Heart left ventricle (tissue), 16 donors: ENCODE measurements at regions of chr20 and their contacts with region 1.

Region 1: GRCh38 chr20:36847009-36847709 is 28.8 kb upstream of the TLDC2 start:
- DNase-seq: peak in 4 of 5 donors; percentile 76 to 92 (median 83)
- ATAC-seq: peak; percentile 82 to 90 (median 89)
- H3K4me3 ChIP-seq: no peak overlapping the region
- H3K27ac ChIP-seq: peak overlapping the region; percentile 64 to 95 (median 85)
- H3K4me1 ChIP-seq: peaks cover 0 to 89% (median 70%) of the 10 kb centered on the region in 12 donors
- H3K27me3 ChIP-seq: no peaks in the 10 kb centered on the region
- CTCF ChIP-seq: no peak
- POLR2A ChIP-seq: no peak

Region 2: GRCh38 chr20:36835453-36836198 is 11.5 kb before region 1 on chr20:
- intact Hi-C with region 1: loop called in 1 of 10 experiments (anchors 1 kb)
- DNase-seq: peak; percentile 95 to 96 (median 96)
- ATAC-seq: peak; percentile 83 to 91 (median 90)
- H3K4me3 ChIP-seq: peak overlapping the region in 8 of 12 donors; percentile 11 to 44 (median 33)
- H3K27ac ChIP-seq: peak overlapping the region in 11 of 12 donors; percentile 69 to 89 (median 81)
- H3K4me1 ChIP-seq: peaks cover 6 to 66% (median 52%) of the 10 kb centered on the region in 12 donors
- H3K27me3 ChIP-seq: no peaks in the 10 kb centered on the region
- CTCF ChIP-seq: no peak
- POLR2A ChIP-seq: peak in 1 of 2 donors; percentile 52

Region 3: DNA sequence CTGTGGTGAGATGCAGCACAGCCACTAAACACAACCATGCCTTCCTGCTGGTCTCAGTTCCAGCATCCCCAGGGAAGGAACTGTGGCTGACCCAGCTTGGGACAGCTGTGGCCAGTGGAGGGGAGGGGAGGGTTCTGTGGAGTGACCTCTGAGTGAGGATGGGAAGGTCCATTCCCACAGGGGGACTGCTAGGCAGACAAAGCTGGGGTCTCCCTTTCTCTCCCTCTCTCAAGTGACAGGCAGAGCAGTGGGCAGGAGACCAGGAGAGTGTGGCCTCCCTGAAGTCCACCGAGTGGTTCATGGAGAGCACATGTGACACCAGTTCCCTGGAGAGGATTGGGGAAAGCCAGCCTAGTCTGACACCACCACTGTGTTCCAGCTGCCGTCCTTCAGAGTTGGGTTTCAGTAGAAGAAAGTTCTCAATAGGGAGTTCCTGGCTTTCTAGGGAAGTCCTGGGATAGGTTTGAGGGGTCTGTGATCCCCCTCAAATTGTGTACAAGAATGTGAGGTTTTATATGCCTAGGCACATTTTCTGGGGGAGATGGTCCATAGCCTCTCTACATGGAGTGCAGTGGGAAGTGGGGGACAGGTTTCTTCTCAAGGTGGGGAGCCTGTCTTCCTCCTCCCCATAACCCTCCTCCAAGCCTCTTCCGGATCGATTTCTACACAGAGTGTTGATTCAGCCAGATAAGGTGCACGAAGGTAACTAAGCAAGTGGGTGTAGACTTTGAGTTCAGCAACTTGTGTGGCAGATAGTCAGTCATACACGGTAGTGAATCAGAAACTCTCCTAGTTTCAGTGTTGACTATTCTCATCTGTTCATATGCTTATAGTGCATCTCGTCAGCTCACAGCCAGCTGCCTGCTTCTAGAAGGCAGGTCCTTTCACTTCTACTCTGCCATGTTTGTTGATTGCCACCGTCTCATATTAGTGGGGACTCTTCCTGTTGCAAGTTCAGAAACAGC is 461.2 kb after region 1 on chr20:
- intact Hi-C with region 1: no loop called
- DNase-seq: peak in 2 of 5 donors; percentile 39 to 58
- ATAC-seq: peak; percentile 21 to 64 (median 42)
- H3K4me3 ChIP-seq: no peak overlapping the region
- H3K27ac ChIP-seq: peak overlapping the region in 4 of 12 donors; percentile 0 to 22 (median 13)
- H3K4me1 ChIP-seq: peaks cover 0 to 50% (median 6%) of the 10 kb centered on the region in 12 donors
- H3K27me3 ChIP-seq: no peaks in the 10 kb centered on the region
- CTCF ChIP-seq: no peak
- POLR2A ChIP-seq: no peak